ENCODE measurements at regions of chr15 and their contacts with region 1.

Region 1: DNA sequence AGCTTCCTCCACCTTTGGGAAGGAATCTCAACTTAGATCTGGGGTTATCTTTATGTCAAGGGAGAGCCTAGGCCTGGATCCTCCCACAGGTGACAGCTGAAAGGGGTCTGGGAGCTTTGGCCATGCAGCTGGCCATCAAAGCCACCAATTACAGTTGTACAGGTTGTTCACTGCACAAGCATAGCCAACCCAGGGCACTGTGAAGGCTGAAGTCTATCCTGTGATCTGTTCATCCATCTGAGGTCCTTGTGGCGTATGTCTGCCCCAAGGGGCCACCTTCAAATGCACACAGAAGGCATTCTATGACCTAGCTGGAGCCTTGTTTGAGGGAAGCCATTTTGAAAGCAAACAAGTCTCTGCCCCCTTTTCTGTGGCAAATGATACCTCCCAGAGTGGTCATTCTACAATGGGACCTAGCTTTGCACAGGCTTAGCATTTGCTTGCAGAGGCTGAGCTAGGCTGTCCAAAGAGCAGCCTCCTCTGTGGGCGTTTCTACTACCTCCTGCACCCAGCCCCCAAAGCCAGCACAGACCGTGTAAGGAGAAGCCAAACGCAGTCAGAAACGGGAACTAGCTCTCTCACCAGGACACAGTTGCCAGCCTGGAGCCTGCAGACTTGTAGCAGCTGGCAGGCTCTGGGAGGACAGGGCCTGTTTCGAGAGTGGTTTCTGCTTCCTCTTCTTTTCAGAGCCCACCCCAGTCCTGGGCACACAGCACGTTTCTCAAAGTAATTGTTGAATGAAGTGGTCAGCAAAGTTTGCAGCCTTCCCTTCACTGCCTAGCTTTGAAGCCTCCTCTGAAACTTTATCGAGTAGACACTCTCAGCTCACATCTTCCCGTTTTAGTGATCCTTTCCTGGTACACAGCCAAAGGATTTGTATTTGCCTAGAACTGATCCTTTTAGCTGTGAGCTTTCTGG is 157.3 kb upstream of the SMAD3 start:
- DNase-seq: no peak
- ATAC-seq: peak; percentile 60
- H3K4me3 ChIP-seq: no peak overlapping the region
- H3K27ac ChIP-seq: no peak overlapping the region
- H3K4me1 ChIP-seq: peaks cover 0 to 11% of the 10 kb centered on the region in 2 experiments; a peak in 3 of 5 replicates
- H3K27me3 ChIP-seq: peaks cover 24 to 27% of the 10 kb centered on the region in 2 experiments
- CTCF ChIP-seq: no peak
- EP300 ChIP-seq: no peak
- POLR2A ChIP-seq: no peak
- RAD21 ChIP-seq: no peak

Region 2: GRCh38 chr15:66789029-66790025 is 118.8 kb before region 1 on chr15:
- CTCF ChIA-PET with region 1: interaction called, 13 read pairs
- POLR2A ChIA-PET with region 1: no interaction called
- in situ Hi-C with region 1: no loop called
- intact Hi-C with region 1: no loop called
- DNase-seq: peak; percentile 62 to 72 (median 67)
- ATAC-seq: peak; percentile 94
- H3K4me3 ChIP-seq: no peak overlapping the region
- H3K27ac ChIP-seq: no peak overlapping the region
- H3K4me1 ChIP-seq: no peaks in the 10 kb centered on the region
- H3K27me3 ChIP-seq: no peaks in the 10 kb centered on the region
- CTCF ChIP-seq: peak; percentile 65 to 75 (median 72)
- EP300 ChIP-seq: no peak
- POLR2A ChIP-seq: no peak
- RAD21 ChIP-seq: peak; percentile 47 to 80

Region 3: GRCh38 chr15:66940368-66940767 is 32.3 kb after region 1 on chr15:
- CTCF ChIA-PET with region 1: no interaction called
- POLR2A ChIA-PET with region 1: no interaction called
- in situ Hi-C with region 1: no loop called
- intact Hi-C with region 1: loop called (anchors 5 kb)
- DNase-seq: no peak
- ATAC-seq: no peak
- H3K4me3 ChIP-seq: no peak overlapping the region
- H3K27ac ChIP-seq: no peak overlapping the region
- H3K4me1 ChIP-seq: peaks cover 0 to 14% of the 10 kb centered on the region in 2 experiments; a peak in 3 of 5 replicates
- H3K27me3 ChIP-seq: peaks cover 0 to 14% of the 10 kb centered on the region in 2 experiments; a peak in 3 of 5 replicates
- CTCF ChIP-seq: no peak
- EP300 ChIP-seq: no peak
- POLR2A ChIP-seq: no peak
- RAD21 ChIP-seq: no peak

Measured in K562 (cell line).